ENCODE measurements at regions of chr17 and their contacts with region 1.

Region 1: GRCh38 chr17:61076621-61077031 is 323.0 kb upstream of the TBX2 start:
- DNase-seq: no peak
- ATAC-seq: no peak
- H3K4me3 Mint-ChIP-seq: no peak overlapping the region
- H3K27ac Mint-ChIP-seq: no peak overlapping the region
- H3K4me1 Mint-ChIP-seq: peaks cover 0 to 2% (median 0%) of the 10 kb centered on the region in 4 donors
- H3K27me3 Mint-ChIP-seq: no peaks in the 10 kb centered on the region

Region 2: DNA sequence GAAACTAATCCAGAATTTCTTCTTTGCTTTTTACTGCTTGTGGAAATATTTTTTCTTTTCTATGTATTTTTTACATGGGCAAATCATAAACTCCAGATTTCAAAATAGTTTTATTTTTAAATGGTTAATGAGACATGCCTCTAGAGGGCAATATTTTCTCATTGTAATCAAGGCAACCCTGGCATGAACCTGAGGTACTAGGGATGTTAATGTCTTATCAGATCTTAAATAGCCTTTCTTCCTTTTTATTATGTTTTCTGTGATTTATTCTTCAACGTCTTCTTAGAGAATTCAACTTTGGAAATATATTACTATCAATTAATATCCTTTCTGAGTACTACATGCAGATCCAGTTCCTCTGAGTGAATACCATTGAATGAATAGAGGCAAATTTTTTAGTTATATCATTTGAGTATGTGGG is 74.3 kb before region 1 on chr17:
- POLR2A ChIA-PET with region 1: interaction called, 10 read pairs
- DNase-seq: peak in 3 of 10 donors; percentile 32 to 45 (median 40)
- ATAC-seq: no peak
- H3K4me3 Mint-ChIP-seq: no peak overlapping the region
- H3K27ac Mint-ChIP-seq: no peak overlapping the region
- H3K4me1 Mint-ChIP-seq: no peaks in the 10 kb centered on the region
- H3K27me3 Mint-ChIP-seq: peaks cover 0 to 1% (median 0%) of the 10 kb centered on the region in 5 donors

Region 3: GRCh38 chr17:61139219-61139618 is 62.6 kb after region 1 on chr17:
- POLR2A ChIA-PET with region 1: no interaction called
- DNase-seq: peak; percentile 11 to 86 (median 66)
- ATAC-seq: peak; percentile 98 to 99
- H3K4me3 Mint-ChIP-seq: peak overlapping the region; percentile 7 to 82 (median 62)
- H3K27ac Mint-ChIP-seq: peak overlapping the region; percentile 2 to 92 (median 74)
- H3K4me1 Mint-ChIP-seq: peaks cover 27 to 45% (median 44%) of the 10 kb centered on the region in 4 donors
- H3K27me3 Mint-ChIP-seq: no peaks in the 10 kb centered on the region

Measured in naive thymus-derived CD8-positive, alpha-beta T cell (primary cell).